CD8-positive, alpha-beta memory T cell (primary cell): ENCODE measurements at regions of chr15 and their contacts with region 1.

Region 1: DNA sequence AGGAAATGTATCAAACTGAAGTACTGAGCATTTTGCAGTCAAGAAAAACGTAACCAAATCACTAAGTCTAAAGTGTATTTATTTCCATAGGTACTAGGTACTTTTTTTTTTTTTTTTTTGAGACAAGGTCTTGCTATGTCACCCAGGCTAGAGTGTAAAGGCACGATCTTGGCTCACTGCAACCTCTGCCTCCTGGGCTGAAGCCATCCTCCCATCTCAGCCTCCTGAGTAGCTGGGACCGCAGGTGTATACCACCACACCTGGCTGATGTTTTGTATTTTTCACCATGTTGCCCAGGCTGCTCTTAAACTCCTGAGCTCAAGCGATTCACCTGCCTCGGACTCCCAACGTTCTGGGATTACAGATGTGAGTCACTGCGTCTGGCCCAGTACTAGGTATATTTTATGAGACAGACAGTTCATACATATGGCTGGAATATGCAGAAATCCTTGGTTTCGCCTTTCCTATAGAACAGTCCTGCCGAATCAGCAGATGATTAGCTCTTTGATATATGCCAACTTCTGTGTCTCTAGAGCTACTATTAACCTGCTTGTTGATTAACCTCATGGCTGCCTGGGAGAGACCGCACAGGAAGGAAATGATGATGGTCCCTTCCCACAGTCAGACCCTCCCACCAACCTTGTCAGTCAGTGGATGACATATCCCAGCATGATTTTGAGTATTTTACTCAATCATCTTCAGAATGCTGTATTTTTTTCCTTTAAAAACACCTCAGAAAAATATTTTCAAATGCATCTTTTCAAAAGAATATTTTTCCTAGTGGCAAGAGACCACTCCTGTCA is 32.3 kb downstream of the TMOD3 start:
- DNase-seq: peak; percentile 42 to 77 (median 65)
- H3K4me3 ChIP-seq: no peak overlapping the region
- H3K4me3 Mint-ChIP-seq: peak overlapping the region; percentile 51 to 80 (median 73)
- H3K27ac ChIP-seq: no peak overlapping the region
- H3K27ac Mint-ChIP-seq: peak overlapping the region; percentile 60 to 91 (median 87)
- H3K4me1 ChIP-seq: peaks cover 12% of the 10 kb centered on the region
- H3K4me1 Mint-ChIP-seq: peaks cover 45 to 75% (median 70%) of the 10 kb centered on the region in 3 donors
- H3K27me3 ChIP-seq: no peaks in the 10 kb centered on the region
- H3K27me3 Mint-ChIP-seq: no peaks in the 10 kb centered on the region

Region 2: GRCh38 chr15:51888593-51889195 is 26.9 kb after region 1 on chr15:
- CTCF ChIA-PET with region 1: interaction called, 4 read pairs
- POLR2A ChIA-PET with region 1: interaction called, 10 read pairs
- DNase-seq: peak in 1 of 5 donors; percentile 11
- H3K4me3 ChIP-seq: no peak overlapping the region
- H3K4me3 Mint-ChIP-seq: no peak overlapping the region
- H3K27ac ChIP-seq: no peak overlapping the region
- H3K27ac Mint-ChIP-seq: peak overlapping the region in 1 of 8 donors; percentile 23
- H3K4me1 ChIP-seq: no peaks in the 10 kb centered on the region
- H3K4me1 Mint-ChIP-seq: peaks cover 14 to 21% (median 14%) of the 10 kb centered on the region in 3 donors
- H3K27me3 ChIP-seq: no peaks in the 10 kb centered on the region
- H3K27me3 Mint-ChIP-seq: no peaks in the 10 kb centered on the region